PC-9 (cell line): ENCODE measurements at regions of chr1 and their contacts with region 1.

Region 1: GRCh38 chr1:208895181-208895580 is 651.0 kb upstream of the PLXNA2 start:
- DNase-seq: no peak
- H3K4me3 ChIP-seq: no peak overlapping the region
- H3K27ac ChIP-seq: no peak overlapping the region
- H3K4me1 ChIP-seq: no peaks in the 10 kb centered on the region
- H3K27me3 ChIP-seq: 0 out of 2 replicates have a peak, but pooled peaks cover 7% of the 10 kb centered on the region
- CTCF ChIP-seq: no peak

Region 2: DNA sequence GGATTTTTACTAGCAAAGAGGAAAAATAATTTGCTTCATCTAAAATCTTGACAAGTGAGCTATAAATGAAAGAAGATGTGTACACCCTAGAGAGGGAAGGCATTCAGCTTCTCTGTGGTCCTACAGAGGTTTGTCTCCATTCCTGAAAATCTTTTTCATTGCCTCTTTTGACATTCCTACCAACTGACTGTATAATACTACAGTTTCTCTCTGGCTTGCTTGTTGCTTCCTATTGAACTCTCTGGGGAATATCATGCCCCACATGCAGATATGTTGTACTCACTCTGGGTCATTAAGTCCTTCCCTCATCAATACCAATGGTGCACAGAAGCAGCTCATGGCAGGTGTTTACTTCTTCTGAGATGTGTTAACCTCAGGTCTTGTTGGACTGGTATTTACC is 279.8 kb before region 1 on chr1:
- CTCF ChIA-PET with region 1: no interaction called
- POLR2A ChIA-PET with region 1: interaction called, 10 read pairs
- intact Hi-C with region 1: no loop called
- DNase-seq: no peak
- H3K4me3 ChIP-seq: no peak overlapping the region
- H3K27ac ChIP-seq: no peak overlapping the region
- H3K4me1 ChIP-seq: no peaks in the 10 kb centered on the region
- H3K27me3 ChIP-seq: 0 out of 2 replicates have a peak, but pooled peaks cover 5% of the 10 kb centered on the region
- CTCF ChIP-seq: no peak